ENCODE measurements at regions of chrX and their contacts with region 1.

Region 1: GRCh38 chrX:140918407-140919038 is 83.9 kb upstream of the SPANXB1 start:
- DNase-seq: peak; percentile 54
- ATAC-seq: peak; percentile 67
- H3K4me3 ChIP-seq: no peak overlapping the region
- H3K27ac ChIP-seq: no peak overlapping the region
- H3K4me1 ChIP-seq: no peaks in the 10 kb centered on the region
- H3K27me3 ChIP-seq: no peaks in the 10 kb centered on the region
- CTCF ChIP-seq: peak; percentile 92
- POLR2A ChIP-seq: no peak
- RAD21 ChIP-seq: peak; percentile 58

Region 2: GRCh38 chrX:140971099-140971795 is 52.7 kb after region 1 on chrX:
- CTCF ChIA-PET with region 1: no interaction called
- POLR2A ChIA-PET with region 1: no interaction called
- dilution Hi-C with region 1: no loop called
- in situ Hi-C with region 1: no loop called
- intact Hi-C with region 1: loop called (anchors 10 kb)
- DNase-seq: no peak
- ATAC-seq: no peak
- H3K4me3 ChIP-seq: no peak overlapping the region
- H3K27ac ChIP-seq: no peak overlapping the region
- H3K4me1 ChIP-seq: no peaks in the 10 kb centered on the region
- H3K27me3 ChIP-seq: no peaks in the 10 kb centered on the region
- CTCF ChIP-seq: no peak
- POLR2A ChIP-seq: no peak
- RAD21 ChIP-seq: no peak

Region 3: GRCh38 chrX:141176586-141177451 is 258.3 kb after region 1 on chrX and contains the start of gene LDOC1:
- CTCF ChIA-PET with region 1: no interaction called
- POLR2A ChIA-PET with region 1: no interaction called
- dilution Hi-C with region 1: no loop called
- in situ Hi-C with region 1: no loop called
- intact Hi-C with region 1: no loop called
- DNase-seq: peak; percentile 71
- ATAC-seq: peak; percentile 98
- H3K4me3 ChIP-seq: peak within 1 kb of the TSS; percentile 99
- H3K27ac ChIP-seq: peak within 1 kb of the TSS; percentile 85
- H3K4me1 ChIP-seq: peaks cover 4% of the 10 kb centered on the region; the same call in 1 of the 2 replicates
- H3K27me3 ChIP-seq: no peaks in the 10 kb centered on the region
- CTCF ChIP-seq: no peak
- POLR2A ChIP-seq: no peak
- RAD21 ChIP-seq: no peak
- total RNA-seq, gene LDOC1: 5.4 and 7.2 TPM in 2 replicates

Region 4: GRCh38 chrX:141278302-141278701 is 359.8 kb after region 1 on chrX:
- CTCF ChIA-PET with region 1: interaction called, 3 read pairs
- POLR2A ChIA-PET with region 1: interaction called, 3 read pairs
- dilution Hi-C with region 1: no loop called
- in situ Hi-C with region 1: loop called (anchors 25 kb)
- intact Hi-C with region 1: loop called (anchors 1 kb)
- DNase-seq: peak; percentile 6
- ATAC-seq: peak; percentile 54
- H3K4me3 ChIP-seq: no peak overlapping the region
- H3K27ac ChIP-seq: no peak overlapping the region
- H3K4me1 ChIP-seq: no peaks in the 10 kb centered on the region
- H3K27me3 ChIP-seq: no peaks in the 10 kb centered on the region
- CTCF ChIP-seq: peak; percentile 56
- POLR2A ChIP-seq: no peak
- RAD21 ChIP-seq: peak; percentile 54

Region 5: DNA sequence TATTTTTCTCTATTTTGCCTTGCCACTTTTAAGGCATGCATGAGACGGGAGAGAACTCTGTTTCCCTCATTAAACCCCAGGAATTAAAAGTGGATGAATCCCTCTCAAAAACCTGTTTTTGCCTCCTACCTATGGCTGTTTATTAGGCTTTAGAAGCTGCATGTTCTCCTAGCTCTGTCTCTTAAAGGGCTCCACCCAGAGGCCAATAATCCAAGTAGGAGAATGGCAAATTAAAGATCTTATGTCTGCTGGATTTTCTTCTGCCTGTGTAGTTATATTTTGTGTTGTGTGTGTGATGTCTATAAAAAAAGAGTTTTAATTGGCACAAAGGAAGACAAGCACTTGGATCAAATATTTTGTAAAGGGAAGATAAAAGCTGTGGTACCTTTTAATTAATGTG is 1017.6 kb after region 1 on chrX:
- CTCF ChIA-PET with region 1: no interaction called
- POLR2A ChIA-PET with region 1: no interaction called
- dilution Hi-C with region 1: no loop called
- in situ Hi-C with region 1: no loop called
- intact Hi-C with region 1: loop called (anchors 5 kb)
- DNase-seq: no peak
- ATAC-seq: no peak
- H3K4me3 ChIP-seq: no peak overlapping the region
- H3K27ac ChIP-seq: no peak overlapping the region
- H3K4me1 ChIP-seq: no peaks in the 10 kb centered on the region
- H3K27me3 ChIP-seq: no peaks in the 10 kb centered on the region
- CTCF ChIP-seq: no peak
- POLR2A ChIP-seq: no peak
- RAD21 ChIP-seq: no peak

Region 6: DNA sequence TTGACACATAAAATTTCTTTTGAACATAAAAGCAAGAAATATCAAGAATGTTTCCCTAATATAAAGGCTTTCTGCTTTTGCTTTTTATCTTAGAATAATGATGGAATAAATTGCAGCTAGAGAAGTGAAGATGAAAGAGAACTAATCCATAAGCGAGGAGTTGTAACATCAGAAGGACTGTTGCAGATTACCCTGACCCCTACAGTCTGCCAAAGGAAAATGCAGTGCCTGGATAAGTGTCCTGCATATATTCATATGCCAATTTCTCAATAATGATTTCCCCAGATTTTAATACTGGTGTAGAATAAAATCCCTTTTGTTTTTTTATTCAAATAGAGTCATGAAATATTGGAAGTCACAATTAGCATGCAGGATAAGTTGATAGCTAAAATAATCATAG is 1170.7 kb after region 1 on chrX:
- CTCF ChIA-PET with region 1: no interaction called
- POLR2A ChIA-PET with region 1: no interaction called
- dilution Hi-C with region 1: no loop called
- in situ Hi-C with region 1: no loop called
- intact Hi-C with region 1: loop called (anchors 5 kb)
- DNase-seq: peak; percentile 1
- ATAC-seq: no peak
- H3K4me3 ChIP-seq: no peak overlapping the region
- H3K27ac ChIP-seq: no peak overlapping the region
- H3K4me1 ChIP-seq: no peaks in the 10 kb centered on the region
- H3K27me3 ChIP-seq: no peaks in the 10 kb centered on the region
- CTCF ChIP-seq: peak; percentile 23; the same call in 1 of the 2 replicates
- POLR2A ChIP-seq: no peak
- RAD21 ChIP-seq: no peak

Measured in IMR-90 (cell line).